A549 (cell line): ENCODE measurements at regions of chr1 and their contacts with region 1.

Region 1: GRCh38 chr1:247373721-247374141 is 42.1 kb upstream of the ZNF496 start:
- DNase-seq: no peak
- ATAC-seq: peak in 1 of 2 experiments; percentile 38; a peak in 2 of 6 replicates
- H3K4me3 ChIP-seq: no peak overlapping the region
- H3K27ac ChIP-seq: no peak overlapping the region
- H3K4me1 ChIP-seq: no peaks in the 10 kb centered on the region
- CTCF ChIP-seq: no peak
- EP300 ChIP-seq: no peak
- POLR2A ChIP-seq: no peak
- RAD21 ChIP-seq: no peak

Region 2: GRCh38 chr1:247228133-247228532 is 145.6 kb before region 1 on chr1:
- CTCF ChIA-PET with region 1: no interaction called
- POLR2A ChIA-PET with region 1: no interaction called
- DNase-seq: no peak
- ATAC-seq: no peak
- H3K4me3 ChIP-seq: no peak overlapping the region
- H3K27ac ChIP-seq: no peak overlapping the region
- H3K4me1 ChIP-seq: no peaks in the 10 kb centered on the region
- CTCF ChIP-seq: no peak
- EP300 ChIP-seq: no peak
- POLR2A ChIP-seq: no peak
- RAD21 ChIP-seq: no peak

Region 3: DNA sequence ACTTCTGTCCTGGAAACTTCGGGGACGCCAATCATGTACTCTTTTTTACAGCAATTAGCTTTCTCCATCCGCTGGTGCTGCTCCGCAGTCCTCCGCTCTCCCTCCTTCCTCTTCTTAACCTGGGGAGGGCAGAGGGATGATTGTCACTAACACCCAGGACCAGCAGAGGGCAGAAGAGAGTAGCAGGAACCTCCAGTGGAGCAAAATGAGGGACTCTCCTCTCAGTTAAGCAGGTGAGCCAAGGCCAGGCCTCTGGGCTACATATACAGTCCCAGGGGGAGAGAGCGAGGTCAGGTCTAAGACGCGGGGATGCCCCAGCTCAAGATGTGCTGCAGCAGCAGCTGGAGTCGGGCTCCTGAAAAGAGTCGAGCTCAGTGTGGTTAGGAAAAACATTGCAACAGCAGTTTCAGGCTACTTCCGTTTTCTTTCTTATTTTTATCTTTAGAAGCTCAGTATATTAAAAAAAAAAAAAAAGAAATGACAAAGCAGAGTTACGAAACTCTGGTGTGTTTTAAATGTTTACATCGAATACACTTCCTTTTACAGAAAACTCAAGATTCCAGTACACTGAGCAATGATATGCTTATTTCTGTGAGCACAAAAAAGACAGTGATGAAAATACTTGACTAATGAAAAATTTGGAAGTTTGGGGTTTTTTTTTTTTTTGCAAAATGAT is 16.5 kb after region 1 on chr1:
- CTCF ChIA-PET with region 1: interaction called, 15 read pairs
- POLR2A ChIA-PET with region 1: interaction called, 3 read pairs
- DNase-seq: peak; percentile 65 to 75
- ATAC-seq: peak; percentile 91 to 98
- H3K4me3 ChIP-seq: no peak overlapping the region
- H3K27ac ChIP-seq: no peak overlapping the region
- H3K4me1 ChIP-seq: no peaks in the 10 kb centered on the region
- CTCF ChIP-seq: peak; percentile 45; the same call in 2 of the 3 replicates
- EP300 ChIP-seq: no peak
- POLR2A ChIP-seq: no peak
- RAD21 ChIP-seq: peak; percentile 36 to 68; a peak in 3 of 5 replicates

Region 4: DNA sequence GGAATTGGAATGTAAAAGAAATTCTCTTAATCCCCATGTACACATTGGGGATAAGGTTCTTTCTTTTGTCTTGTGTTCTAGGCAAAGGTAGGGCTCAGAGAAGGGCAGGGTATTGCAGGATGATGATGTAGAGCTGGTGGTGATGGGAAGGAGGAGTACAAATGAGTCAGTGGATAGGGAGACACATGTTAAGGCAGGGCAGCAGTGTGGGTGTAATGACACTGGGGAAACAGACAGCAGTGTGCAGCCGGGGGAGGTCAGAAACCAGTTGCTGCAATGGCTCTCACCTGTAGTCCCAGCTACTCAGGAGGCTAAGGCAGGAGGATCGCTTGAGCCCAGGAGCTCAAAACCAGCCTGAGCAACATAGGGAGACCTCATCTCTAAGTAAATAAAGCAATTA is 47.3 kb after region 1 on chr1:
- CTCF ChIA-PET with region 1: no interaction called
- POLR2A ChIA-PET with region 1: no interaction called
- DNase-seq: no peak
- ATAC-seq: no peak
- H3K4me3 ChIP-seq: no peak overlapping the region
- H3K27ac ChIP-seq: no peak overlapping the region
- H3K4me1 ChIP-seq: no peaks in the 10 kb centered on the region
- CTCF ChIP-seq: no peak
- EP300 ChIP-seq: no peak
- POLR2A ChIP-seq: no peak
- RAD21 ChIP-seq: no peak

Region 5: DNA sequence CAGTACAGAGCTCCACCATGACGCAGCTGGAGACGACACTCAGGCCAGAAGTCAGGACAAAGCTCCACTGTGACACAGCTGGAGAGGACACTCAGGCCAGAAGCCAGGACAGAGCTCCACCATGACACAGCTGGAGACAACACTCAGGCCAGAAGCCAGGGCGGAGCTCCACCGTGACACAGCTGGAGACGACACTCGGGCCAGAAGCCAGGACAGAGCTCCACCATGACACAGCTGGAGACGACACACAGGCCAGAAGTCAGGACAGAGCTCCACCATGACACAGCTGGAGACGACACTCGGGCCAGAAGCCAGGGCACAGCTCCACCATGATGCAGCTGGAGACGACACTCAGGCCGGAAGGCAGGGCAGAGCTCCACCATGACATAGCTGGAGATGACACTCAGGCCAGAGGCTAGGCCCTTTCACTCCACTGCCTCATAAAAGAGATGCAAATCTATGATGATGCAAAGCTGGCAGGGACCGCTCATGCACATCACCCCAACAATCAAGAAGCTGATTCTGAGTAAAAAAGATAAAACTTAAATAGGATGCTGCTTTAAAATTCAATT is 97.8 kb after region 1 on chr1:
- CTCF ChIA-PET with region 1: no interaction called
- POLR2A ChIA-PET with region 1: no interaction called
- DNase-seq: no peak
- ATAC-seq: no peak
- H3K4me3 ChIP-seq: no peak overlapping the region
- H3K27ac ChIP-seq: no peak overlapping the region
- H3K4me1 ChIP-seq: no peaks in the 10 kb centered on the region
- CTCF ChIP-seq: no peak
- EP300 ChIP-seq: no peak
- POLR2A ChIP-seq: no peak
- RAD21 ChIP-seq: no peak

Region 6: DNA sequence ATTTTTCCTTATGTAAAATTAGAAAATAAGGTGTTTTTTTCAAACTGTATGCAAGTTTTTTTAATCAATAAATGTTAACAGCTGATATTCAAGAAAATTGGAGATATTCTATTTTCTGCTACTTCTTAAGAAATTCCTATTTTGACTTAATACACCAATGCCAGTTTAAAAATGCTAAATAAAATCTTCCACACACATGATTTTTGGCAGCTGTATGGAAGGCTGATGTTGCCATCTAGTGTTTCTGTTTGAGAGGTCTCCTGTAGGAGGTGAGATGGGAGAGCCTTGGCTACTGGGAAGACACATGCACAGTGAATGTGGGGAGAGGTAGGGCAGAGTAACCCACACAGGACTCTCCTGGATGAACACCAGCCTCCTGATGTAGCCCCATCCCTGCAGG is 113.3 kb after region 1 on chr1:
- CTCF ChIA-PET with region 1: interaction called, 14 read pairs
- POLR2A ChIA-PET with region 1: no interaction called
- DNase-seq: peak; percentile 4 to 31
- ATAC-seq: peak; percentile 66; a peak in 3 of 6 replicates
- H3K4me3 ChIP-seq: no peak overlapping the region
- H3K27ac ChIP-seq: no peak overlapping the region
- H3K4me1 ChIP-seq: no peaks in the 10 kb centered on the region
- CTCF ChIP-seq: peak; percentile 17; the same call in 1 of the 3 replicates
- EP300 ChIP-seq: no peak
- POLR2A ChIP-seq: no peak
- RAD21 ChIP-seq: peak; percentile 27 to 50; a peak in 3 of 5 replicates